IMR-90 (cell line): ENCODE measurements at regions of chr19 and their contacts with region 1.

Region 1: GRCh38 chr19:52786457-52787359 is at the start of gene ZNF600:
- DNase-seq: peak; percentile 48
- ATAC-seq: peak; percentile 99
- H3K4me3 ChIP-seq: peak within 1 kb of the TSS; percentile 86
- H3K27ac ChIP-seq: 0 out of 2 replicates have a peak within 1 kb of the TSS, but pooled peaks have one; percentile 32
- H3K4me1 ChIP-seq: 0 out of 2 replicates have a peak, but pooled peaks cover 1% of the 10 kb centered on the region
- H3K27me3 ChIP-seq: no peaks in the 10 kb centered on the region
- CTCF ChIP-seq: no peak
- POLR2A ChIP-seq: no peak
- RAD21 ChIP-seq: no peak
- total RNA-seq, gene ZNF600: 3.9 and 4.1 TPM in 2 replicates

Region 2: GRCh38 chr19:52648336-52649016 is 138.2 kb before region 1 on chr19:
- CTCF ChIA-PET with region 1: no interaction called
- POLR2A ChIA-PET with region 1: interaction called, 20 read pairs
- dilution Hi-C with region 1: no loop called
- in situ Hi-C with region 1: no loop called
- intact Hi-C with region 1: no loop called
- DNase-seq: peak; percentile 68
- ATAC-seq: peak; percentile 82
- H3K4me3 ChIP-seq: no peak overlapping the region
- H3K27ac ChIP-seq: peak overlapping the region; percentile 81
- H3K4me1 ChIP-seq: peaks cover 16% of the 10 kb centered on the region
- H3K27me3 ChIP-seq: no peaks in the 10 kb centered on the region
- CTCF ChIP-seq: no peak
- POLR2A ChIP-seq: no peak
- RAD21 ChIP-seq: no peak